ENCODE measurements at regions of chr10 and their contacts with region 1.

Region 1: DNA sequence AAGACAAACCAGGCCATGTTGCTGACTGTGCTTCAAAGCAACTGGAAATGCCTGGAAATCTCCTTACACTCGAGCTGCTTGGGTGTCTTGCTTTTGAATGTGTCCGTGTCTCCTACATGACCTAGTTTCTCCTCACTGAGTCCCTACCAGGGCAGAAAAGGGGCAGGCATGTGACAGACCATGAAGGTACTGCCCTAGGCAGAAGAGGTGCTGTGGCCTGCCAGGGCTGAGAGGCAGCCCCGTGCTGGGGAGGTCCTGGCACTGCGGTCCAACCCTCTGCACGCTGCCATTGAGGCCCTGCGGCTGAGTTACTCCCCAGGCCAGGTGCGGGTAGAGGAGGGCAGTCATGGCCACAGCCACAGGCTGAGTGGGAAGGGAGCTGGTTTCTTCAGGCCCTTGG is 159.3 kb downstream of the LYZL1 start:
- DNase-seq: no peak
- H3K4me3 ChIP-seq: no peak overlapping the region
- H3K27ac ChIP-seq: no peak overlapping the region
- H3K4me1 ChIP-seq: peaks cover 0 to 30% (median 6%) of the 10 kb centered on the region in 4 donors
- H3K27me3 ChIP-seq: no peaks in the 10 kb centered on the region
- CTCF ChIP-seq: no peak

Region 2: DNA sequence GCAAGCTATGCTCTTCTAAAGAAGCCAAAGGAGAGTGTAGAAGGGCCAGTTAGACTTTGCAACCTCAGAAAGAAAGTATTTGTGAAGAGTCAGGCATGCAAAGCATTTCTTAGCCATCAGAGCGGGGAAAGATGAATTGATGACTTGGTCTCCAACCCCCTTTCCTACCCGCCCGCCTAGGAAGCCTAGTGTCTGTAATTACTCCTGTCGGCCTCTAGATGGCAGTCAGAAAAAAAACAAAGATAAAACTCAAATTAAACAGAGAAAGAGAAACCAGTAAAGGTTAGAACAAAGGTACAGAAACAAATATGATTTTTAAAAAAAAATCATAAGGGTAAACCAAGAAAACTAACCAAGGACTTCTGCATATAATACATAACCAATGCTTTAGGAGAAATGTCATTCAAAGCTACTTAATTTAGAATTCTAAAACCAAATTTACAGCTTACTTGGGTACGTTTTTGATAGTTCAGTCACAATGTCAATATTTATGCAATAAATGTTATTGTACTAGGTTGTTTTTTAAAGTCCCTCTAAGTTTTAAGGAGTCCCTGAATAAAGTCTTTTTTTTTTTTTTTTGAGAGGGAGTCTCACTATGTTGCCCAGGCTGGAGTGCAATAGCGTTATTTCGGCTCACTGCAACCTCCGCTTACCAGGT is 61.7 kb before region 1 on chr10:
- intact Hi-C with region 1: loop called (anchors 2 kb)
- DNase-seq: no peak
- H3K4me3 ChIP-seq: no peak overlapping the region
- H3K27ac ChIP-seq: no peak overlapping the region
- H3K4me1 ChIP-seq: no peaks in the 10 kb centered on the region
- H3K27me3 ChIP-seq: no peaks in the 10 kb centered on the region
- CTCF ChIP-seq: peak; percentile 74 to 75

Region 3: DNA sequence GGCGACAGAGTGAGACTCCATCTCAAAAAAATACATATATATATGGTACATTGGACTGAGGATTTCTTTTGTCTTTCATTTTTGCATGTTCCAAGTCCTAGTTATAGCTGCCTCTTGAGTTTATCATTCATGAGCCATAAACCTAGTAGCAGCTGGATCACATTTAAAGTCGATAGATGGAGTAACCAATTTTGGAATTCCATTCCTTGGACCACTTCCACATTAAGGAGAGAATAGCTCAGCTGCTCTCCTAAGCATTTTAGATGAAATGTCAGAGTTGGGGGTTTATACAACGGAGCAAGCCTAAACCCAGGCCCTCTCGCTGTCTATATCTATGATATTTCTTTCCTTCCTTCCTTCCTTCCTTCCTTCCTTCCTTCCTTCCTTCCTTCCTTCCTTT is 18.0 kb before region 1 on chr10:
- intact Hi-C with region 1: no loop called
- DNase-seq: no peak
- H3K4me3 ChIP-seq: no peak overlapping the region
- H3K27ac ChIP-seq: no peak overlapping the region
- H3K4me1 ChIP-seq: no peaks in the 10 kb centered on the region
- H3K27me3 ChIP-seq: no peaks in the 10 kb centered on the region
- CTCF ChIP-seq: no peak

Measured in tibial artery (tissue), 4 donors.